ENCODE measurements at regions of chr1 and their contacts with region 1.

Region 1: GRCh38 chr1:200131616-200132015 is 104.1 kb downstream of the NR5A2 start:
- DNase-seq: peak; percentile 43
- ATAC-seq: no peak
- H3K4me3 ChIP-seq: no peak overlapping the region
- H3K27ac ChIP-seq: no peak overlapping the region
- H3K4me1 ChIP-seq: peaks cover 29% of the 10 kb centered on the region
- H3K27me3 ChIP-seq: no peaks in the 10 kb centered on the region
- CTCF ChIP-seq: peak; percentile 38; the same call in 1 of the 2 replicates

Region 2: GRCh38 chr1:200090252-200091096 is 41.1 kb before region 1 on chr1:
- CTCF ChIA-PET with region 1: no interaction called
- POLR2A ChIA-PET with region 1: no interaction called
- intact Hi-C with region 1: loop called (anchors 2 kb)
- DNase-seq: peak; percentile 66
- ATAC-seq: peak; percentile 75
- H3K4me3 ChIP-seq: no peak overlapping the region
- H3K27ac ChIP-seq: no peak overlapping the region
- H3K4me1 ChIP-seq: peaks cover 14% of the 10 kb centered on the region
- H3K27me3 ChIP-seq: no peaks in the 10 kb centered on the region
- CTCF ChIP-seq: peak; percentile 93

Region 3: DNA sequence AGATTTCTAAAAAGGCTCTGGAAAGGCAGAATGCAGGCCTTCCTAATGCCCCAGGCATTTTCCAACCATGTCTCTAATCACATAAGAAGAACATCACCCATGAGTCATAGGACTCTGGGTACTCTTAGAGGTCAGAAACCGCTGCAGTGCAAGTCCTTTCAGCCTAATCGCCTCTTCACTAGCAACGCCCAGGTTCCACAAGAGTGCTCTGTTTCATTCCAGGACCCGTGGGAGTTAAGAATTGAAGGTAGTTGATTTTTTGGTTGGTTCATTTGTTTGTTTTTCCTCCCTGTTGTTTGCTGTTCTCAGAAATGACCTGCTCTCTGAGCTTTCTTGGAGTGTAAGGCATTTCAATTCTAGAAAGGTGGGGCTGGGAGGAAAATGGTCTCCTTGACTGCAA is 19.1 kb after region 1 on chr1:
- CTCF ChIA-PET with region 1: no interaction called
- POLR2A ChIA-PET with region 1: no interaction called
- intact Hi-C with region 1: no loop called
- DNase-seq: peak; percentile 99
- ATAC-seq: peak; percentile 99
- H3K4me3 ChIP-seq: 0 out of 2 replicates have a peak overlapping the region, but pooled peaks have one; percentile 2
- H3K27ac ChIP-seq: peak overlapping the region; percentile 81
- H3K4me1 ChIP-seq: peaks cover 27% of the 10 kb centered on the region
- H3K27me3 ChIP-seq: no peaks in the 10 kb centered on the region
- CTCF ChIP-seq: no peak; the same call in 1 of the 2 replicates